ENCODE measurements at regions of chr5 and their contacts with region 1.

Region 1: GRCh38 chr5:122076664-122077365 is 1.2 kb downstream of the LOX start:
- DNase-seq: no peak
- H3K4me3 ChIP-seq: peak overlapping the region; percentile 90
- CTCF ChIP-seq: peak; percentile 96

Region 2: GRCh38 chr5:121974261-121974660 is 102.6 kb before region 1 on chr5:
- CTCF ChIA-PET with region 1: interaction called, 12 read pairs
- POLR2A ChIA-PET with region 1: interaction called, 16 read pairs
- DNase-seq: no peak
- H3K4me3 ChIP-seq: no peak overlapping the region
- CTCF ChIP-seq: no peak

Region 3: GRCh38 chr5:122040636-122041302 is 36.0 kb before region 1 on chr5:
- CTCF ChIA-PET with region 1: no interaction called
- POLR2A ChIA-PET with region 1: no interaction called
- DNase-seq: no peak
- H3K4me3 ChIP-seq: no peak overlapping the region
- CTCF ChIP-seq: no peak

Region 4: DNA sequence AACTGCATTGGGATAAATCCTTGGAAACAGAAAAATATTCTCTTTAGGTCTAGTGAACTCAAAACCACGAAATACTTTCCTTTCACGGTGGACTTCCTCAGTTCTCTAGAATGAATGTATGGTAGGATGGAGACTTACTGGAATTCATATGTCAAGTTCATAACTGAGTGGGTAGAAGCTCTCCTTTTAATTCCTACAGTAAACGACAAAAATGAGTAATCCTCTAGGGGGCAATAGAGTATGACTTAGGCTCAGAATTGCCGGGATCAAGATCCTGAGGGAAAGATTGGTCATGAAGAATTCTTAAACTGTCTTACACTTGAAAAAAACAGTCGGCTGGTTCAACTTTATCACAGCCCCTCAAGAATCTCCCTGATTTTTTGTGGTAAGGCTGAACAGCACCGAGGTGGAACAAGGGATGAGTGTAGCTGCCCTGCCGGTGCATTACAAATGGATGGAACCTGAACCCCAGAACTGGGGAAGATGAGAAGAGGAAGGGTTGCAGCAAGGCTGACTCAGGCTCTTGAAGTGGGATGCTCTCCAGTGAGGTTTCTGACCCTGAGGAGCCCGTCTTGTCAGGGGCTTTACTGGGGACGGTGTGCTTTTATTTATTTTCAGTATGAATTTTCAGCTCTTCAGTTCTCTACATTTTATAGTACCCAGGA is 15.3 kb after region 1 on chr5:
- CTCF ChIA-PET with region 1: interaction called, 82 read pairs
- POLR2A ChIA-PET with region 1: interaction called, 60 read pairs
- DNase-seq: peak; percentile 77
- H3K4me3 ChIP-seq: peak overlapping the region; percentile 19
- CTCF ChIP-seq: peak; percentile 21

Region 5: GRCh38 chr5:122163121-122164069 is 86.6 kb after region 1 on chr5:
- CTCF ChIA-PET with region 1: interaction called, 78 read pairs
- POLR2A ChIA-PET with region 1: interaction called, 15 read pairs
- DNase-seq: peak; percentile 88
- H3K4me3 ChIP-seq: no peak overlapping the region
- CTCF ChIP-seq: no peak

Region 6: GRCh38 chr5:122478741-122479413 is 402.1 kb after region 1 on chr5:
- CTCF ChIA-PET with region 1: no interaction called
- POLR2A ChIA-PET with region 1: no interaction called
- DNase-seq: no peak
- H3K4me3 ChIP-seq: no peak overlapping the region
- CTCF ChIP-seq: no peak